ENCODE measurements at regions of chr3 and their contacts with region 1.

Region 1: GRCh38 chr3:126982471-126983175 is at the start of gene PLXNA1:
- DNase-seq: peak in 1 of 2 experiments; percentile 82
- H3K4me3 ChIP-seq: peak within 1 kb of the TSS; percentile 86
- H3K27ac ChIP-seq: no peak within 1 kb of the TSS
- H3K4me1 ChIP-seq: peaks cover 20% of the 10 kb centered on the region
- H3K27me3 ChIP-seq: no peaks in the 10 kb centered on the region
- CTCF ChIP-seq: peak; percentile 93
- total RNA-seq, gene PLXNA1: 83.1 and 88.2 TPM in 2 replicates

Region 2: GRCh38 chr3:126679318-126679751 is 303.3 kb before region 1 on chr3:
- CTCF ChIA-PET with region 1: interaction called, 15 read pairs
- POLR2A ChIA-PET with region 1: no interaction called
- intact Hi-C with region 1: loop called (anchors 1 kb)
- DNase-seq: peak; percentile 59 to 88
- H3K4me3 ChIP-seq: no peak overlapping the region
- H3K27ac ChIP-seq: no peak overlapping the region
- H3K4me1 ChIP-seq: no peaks in the 10 kb centered on the region
- H3K27me3 ChIP-seq: peaks cover 12% of the 10 kb centered on the region
- CTCF ChIP-seq: peak; percentile 97

Region 3: GRCh38 chr3:126961191-126961790 is 21.3 kb before region 1 on chr3:
- CTCF ChIA-PET with region 1: no interaction called
- POLR2A ChIA-PET with region 1: no interaction called
- intact Hi-C with region 1: loop called (anchors 2 kb)
- DNase-seq: peak; percentile 41 to 68
- H3K4me3 ChIP-seq: no peak overlapping the region
- H3K27ac ChIP-seq: peak overlapping the region; percentile 35
- H3K4me1 ChIP-seq: peaks cover 49% of the 10 kb centered on the region
- H3K27me3 ChIP-seq: no peaks in the 10 kb centered on the region
- CTCF ChIP-seq: no peak

Region 4: GRCh38 chr3:127254730-127255129 is 272.1 kb after region 1 on chr3:
- CTCF ChIA-PET with region 1: no interaction called
- POLR2A ChIA-PET with region 1: no interaction called
- intact Hi-C with region 1: loop called (anchors 10 kb)
- DNase-seq: no peak
- H3K4me3 ChIP-seq: no peak overlapping the region
- H3K27ac ChIP-seq: no peak overlapping the region
- H3K4me1 ChIP-seq: no peaks in the 10 kb centered on the region
- H3K27me3 ChIP-seq: peaks cover 13% of the 10 kb centered on the region
- CTCF ChIP-seq: peak; percentile 51

Region 5: DNA sequence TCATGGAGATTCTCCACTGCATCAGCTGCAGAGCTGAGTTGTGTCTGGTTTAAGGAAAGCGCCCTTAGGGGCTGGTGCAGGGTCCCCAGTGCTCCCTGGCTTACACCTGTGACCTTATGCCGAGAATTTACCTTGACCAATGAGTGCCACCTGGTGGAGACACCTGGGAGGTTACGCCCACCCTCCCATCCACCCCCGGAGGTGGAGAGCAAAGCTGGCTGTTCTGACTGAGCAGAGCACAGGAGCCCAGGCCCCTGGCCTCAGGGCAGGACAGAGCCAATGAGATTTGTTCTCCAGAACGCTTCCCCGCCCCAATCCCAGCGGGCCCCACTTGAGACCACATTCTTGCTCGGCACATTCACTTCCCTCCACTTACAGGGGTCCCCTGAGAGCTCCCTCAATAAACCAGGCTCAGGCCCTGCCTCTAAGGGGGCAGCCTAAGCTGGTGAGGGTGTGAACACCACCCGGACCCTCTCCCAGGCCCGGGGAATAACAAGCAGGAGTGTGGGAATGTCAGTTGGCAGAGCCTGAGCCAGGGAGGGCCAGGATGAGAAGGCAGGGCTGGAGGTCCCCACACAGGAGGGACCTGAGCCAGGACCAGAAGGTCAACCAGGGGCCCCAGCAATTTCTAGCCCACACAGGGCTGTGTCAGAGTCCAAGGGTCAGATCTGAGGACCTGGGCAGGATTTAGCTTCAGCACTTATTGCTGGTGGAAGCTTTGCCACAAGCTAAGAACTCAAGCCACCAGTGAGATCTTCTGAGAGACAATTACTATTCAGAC is 490.8 kb after region 1 on chr3:
- CTCF ChIA-PET with region 1: no interaction called
- POLR2A ChIA-PET with region 1: no interaction called
- intact Hi-C with region 1: loop called (anchors 5 kb)
- DNase-seq: peak in 1 of 2 experiments; percentile 58
- H3K4me3 ChIP-seq: no peak overlapping the region
- H3K27ac ChIP-seq: no peak overlapping the region
- H3K4me1 ChIP-seq: no peaks in the 10 kb centered on the region
- H3K27me3 ChIP-seq: peaks cover 43% of the 10 kb centered on the region
- CTCF ChIP-seq: peak; percentile 58